ENCODE measurements at regions of chr13 and their contacts with region 1.

Region 1: GRCh38 chr13:44815623-44816022 is 173.6 kb downstream of the NUFIP1 start:
- DNase-seq: peak; percentile 90 to 96
- H3K4me3 ChIP-seq: no peak overlapping the region
- H3K4me3 Mint-ChIP-seq: peak overlapping the region; percentile 1
- H3K27ac Mint-ChIP-seq: peak overlapping the region; percentile 76
- H3K4me1 ChIP-seq: peaks cover 86% of the 10 kb centered on the region
- H3K4me1 Mint-ChIP-seq: peaks cover 77% of the 10 kb centered on the region
- H3K27me3 ChIP-seq: no peaks in the 10 kb centered on the region
- H3K27me3 Mint-ChIP-seq: no peaks in the 10 kb centered on the region
- CTCF ChIP-seq: no peak

Region 2: DNA sequence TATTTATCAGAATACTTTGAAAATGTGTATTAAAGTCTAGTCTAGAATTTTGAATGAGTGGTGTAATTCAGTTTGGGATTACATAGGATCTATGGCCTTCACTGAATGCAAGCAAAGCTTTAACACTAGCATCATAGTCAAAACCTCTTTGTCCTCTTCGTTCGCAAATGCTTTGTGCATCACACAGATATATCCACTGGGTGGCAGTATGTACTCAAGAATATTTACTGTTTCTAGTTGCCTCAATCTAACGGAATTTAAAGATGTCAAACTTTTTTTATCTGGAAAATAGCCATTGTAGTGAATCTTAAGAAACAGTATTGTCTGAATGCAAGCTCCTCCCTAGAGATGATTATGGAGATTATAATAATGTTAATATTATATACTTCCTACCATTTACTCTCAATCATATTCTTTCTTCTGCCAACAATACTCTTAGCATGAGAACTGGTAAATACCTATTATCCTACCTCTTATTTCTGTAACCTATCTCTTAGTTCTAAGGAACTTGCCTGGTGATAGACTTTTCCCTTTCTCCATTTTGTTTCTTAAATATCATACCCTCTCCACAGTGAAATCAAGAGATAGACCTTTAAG is 910.1 kb before region 1 on chr13:
- CTCF ChIA-PET with region 1: no interaction called
- POLR2A ChIA-PET with region 1: no interaction called
- intact Hi-C with region 1: loop called (anchors 10 kb)
- DNase-seq: peak in 1 of 2 experiments; percentile 63
- H3K4me3 ChIP-seq: no peak overlapping the region
- H3K4me3 Mint-ChIP-seq: no peak overlapping the region
- H3K27ac Mint-ChIP-seq: no peak overlapping the region
- H3K4me1 ChIP-seq: no peaks in the 10 kb centered on the region
- H3K4me1 Mint-ChIP-seq: peaks cover 7% of the 10 kb centered on the region
- H3K27me3 ChIP-seq: no peaks in the 10 kb centered on the region
- H3K27me3 Mint-ChIP-seq: peaks cover 2% of the 10 kb centered on the region
- CTCF ChIP-seq: peak; percentile 63 to 86

Region 3: DNA sequence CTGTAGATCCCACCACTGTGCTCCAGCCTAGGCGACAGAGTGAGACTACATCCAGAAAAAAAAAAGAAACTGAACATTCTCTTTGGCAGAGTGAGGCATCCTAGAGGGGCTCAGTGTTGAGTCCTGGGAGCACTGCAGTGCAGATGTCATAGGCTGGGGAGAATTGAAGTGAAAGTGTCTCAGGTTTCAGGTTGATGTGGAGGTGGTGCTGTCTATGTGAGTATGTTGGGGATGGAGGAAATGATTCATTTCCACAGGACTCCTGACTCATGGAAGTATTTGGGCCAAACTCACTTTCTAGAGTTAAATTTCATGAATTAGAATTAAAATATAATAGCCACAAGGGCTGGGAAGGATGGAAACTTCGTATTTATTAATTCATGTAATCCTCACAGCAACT is 105.0 kb before region 1 on chr13:
- CTCF ChIA-PET with region 1: no interaction called
- POLR2A ChIA-PET with region 1: no interaction called
- intact Hi-C with region 1: no loop called
- DNase-seq: no peak
- H3K4me3 ChIP-seq: no peak overlapping the region
- H3K4me3 Mint-ChIP-seq: no peak overlapping the region
- H3K27ac Mint-ChIP-seq: no peak overlapping the region
- H3K4me1 ChIP-seq: peaks cover 18% of the 10 kb centered on the region
- H3K4me1 Mint-ChIP-seq: peaks cover 7% of the 10 kb centered on the region
- H3K27me3 ChIP-seq: no peaks in the 10 kb centered on the region
- H3K27me3 Mint-ChIP-seq: no peaks in the 10 kb centered on the region
- CTCF ChIP-seq: no peak

Region 4: DNA sequence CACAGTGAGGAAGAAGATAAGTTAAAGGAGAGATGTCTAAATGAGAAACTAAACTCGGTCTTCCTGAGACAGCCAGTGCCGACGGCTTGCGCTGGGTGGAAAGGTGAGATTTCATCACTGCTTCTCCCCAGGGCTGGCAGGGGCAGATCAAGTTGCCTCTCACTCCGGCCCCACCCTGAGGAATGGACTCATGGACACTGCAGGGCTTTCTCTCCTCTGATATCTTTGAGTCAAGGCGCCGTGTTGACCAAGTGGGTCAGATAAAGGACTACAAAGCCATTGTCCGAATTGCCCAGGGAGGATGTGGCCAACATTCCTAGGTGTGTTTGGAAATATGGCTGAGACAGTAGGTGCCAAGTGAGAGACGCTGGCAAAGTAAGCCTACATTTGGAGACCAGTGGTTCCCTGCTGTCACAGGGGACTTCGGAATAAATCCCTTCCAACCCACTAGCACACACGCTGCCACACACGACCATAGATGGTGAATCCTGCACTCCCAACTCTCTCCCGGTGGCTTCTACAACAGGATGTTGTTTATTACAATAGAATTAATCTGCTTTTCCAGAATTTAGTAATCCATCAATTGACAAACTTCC is 83.0 kb before region 1 on chr13:
- CTCF ChIA-PET with region 1: no interaction called
- POLR2A ChIA-PET with region 1: no interaction called
- intact Hi-C with region 1: loop called (anchors 1 kb)
- DNase-seq: peak; percentile 86 to 94
- H3K4me3 ChIP-seq: no peak overlapping the region
- H3K4me3 Mint-ChIP-seq: peak overlapping the region; percentile 33
- H3K27ac Mint-ChIP-seq: peak overlapping the region; percentile 15
- H3K4me1 ChIP-seq: peaks cover 18% of the 10 kb centered on the region
- H3K4me1 Mint-ChIP-seq: peaks cover 31% of the 10 kb centered on the region
- H3K27me3 ChIP-seq: no peaks in the 10 kb centered on the region
- H3K27me3 Mint-ChIP-seq: no peaks in the 10 kb centered on the region
- CTCF ChIP-seq: no peak

Region 5: DNA sequence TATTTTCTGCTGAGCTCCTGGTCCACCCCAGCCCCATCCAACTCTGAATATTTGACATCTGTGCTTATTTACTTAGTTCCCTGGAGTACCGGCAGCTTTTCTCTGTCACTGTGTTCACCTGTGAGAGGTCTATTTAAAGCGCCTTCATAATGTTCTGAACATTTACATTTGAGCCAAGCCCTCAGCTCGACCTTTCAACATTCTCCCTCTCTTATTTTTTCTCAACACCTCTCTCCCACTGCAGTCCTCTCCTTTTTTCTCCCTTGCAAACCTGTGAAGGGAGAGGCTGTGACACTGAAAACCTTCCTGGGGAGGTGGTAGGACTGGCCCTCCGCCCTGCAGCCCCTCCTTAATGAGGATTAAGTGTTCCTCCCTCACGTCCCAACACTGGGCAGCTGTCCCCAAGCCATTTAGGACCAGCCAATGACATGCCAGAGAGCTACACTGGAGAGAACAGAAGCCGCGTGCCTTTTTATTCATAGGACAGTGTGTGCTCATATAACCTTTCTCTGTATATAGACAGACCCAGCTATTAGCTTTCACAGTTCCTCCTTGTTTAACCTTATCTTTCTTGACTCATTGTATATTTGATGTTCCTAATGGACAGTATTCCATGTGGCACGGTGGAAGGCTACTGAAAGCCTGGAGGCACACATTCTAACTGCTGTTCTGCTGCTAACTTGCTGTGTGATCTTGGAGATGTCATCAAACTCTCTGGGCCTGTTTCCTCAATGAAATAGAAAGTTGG is 38.9 kb after region 1 on chr13:
- CTCF ChIA-PET with region 1: interaction called, 3 read pairs
- POLR2A ChIA-PET with region 1: interaction called, 3 read pairs
- intact Hi-C with region 1: loop called (anchors 1 kb)
- DNase-seq: peak; percentile 66 to 79
- H3K4me3 ChIP-seq: peak overlapping the region; percentile 21
- H3K4me3 Mint-ChIP-seq: peak overlapping the region; percentile 74
- H3K27ac Mint-ChIP-seq: peak overlapping the region; percentile 73
- H3K4me1 ChIP-seq: peaks cover 37% of the 10 kb centered on the region
- H3K4me1 Mint-ChIP-seq: peaks cover 45% of the 10 kb centered on the region
- H3K27me3 ChIP-seq: no peaks in the 10 kb centered on the region
- H3K27me3 Mint-ChIP-seq: no peaks in the 10 kb centered on the region
- CTCF ChIP-seq: no peak

Region 6: GRCh38 chr13:44917589-44918325 is 102.1 kb after region 1 on chr13:
- CTCF ChIA-PET with region 1: interaction called, 5 read pairs
- POLR2A ChIA-PET with region 1: no interaction called
- intact Hi-C with region 1: loop called (anchors 1 kb)
- DNase-seq: peak; percentile 96 to 97
- H3K4me3 ChIP-seq: peak overlapping the region; percentile 61
- H3K4me3 Mint-ChIP-seq: no peak overlapping the region
- H3K27ac Mint-ChIP-seq: no peak overlapping the region
- H3K4me1 ChIP-seq: peaks cover 7% of the 10 kb centered on the region; the same call in 1 of the 2 replicates
- H3K4me1 Mint-ChIP-seq: no peaks in the 10 kb centered on the region
- H3K27me3 ChIP-seq: no peaks in the 10 kb centered on the region
- H3K27me3 Mint-ChIP-seq: no peaks in the 10 kb centered on the region
- CTCF ChIP-seq: peak; percentile 40 to 75

Region 7: DNA sequence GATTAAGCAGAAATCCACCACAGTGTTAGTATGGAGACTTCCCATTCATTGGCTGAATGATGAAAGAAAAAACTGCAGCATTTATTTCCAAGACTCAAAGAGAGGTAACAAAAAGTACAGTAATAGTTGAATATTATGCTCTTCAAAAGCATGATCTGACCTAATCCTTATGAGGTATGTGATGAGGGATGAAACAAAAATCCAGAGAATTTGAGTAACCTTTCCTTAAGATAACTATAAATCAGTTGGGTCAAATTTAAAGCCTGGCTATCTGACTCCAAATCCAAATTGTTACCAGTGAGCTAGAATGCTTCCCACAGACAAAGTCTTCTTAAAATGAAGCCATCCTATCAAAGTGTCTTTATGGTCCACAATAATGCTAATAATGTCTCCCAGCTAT is 135.6 kb after region 1 on chr13:
- CTCF ChIA-PET with region 1: no interaction called
- POLR2A ChIA-PET with region 1: no interaction called
- intact Hi-C with region 1: no loop called
- DNase-seq: no peak
- H3K4me3 ChIP-seq: no peak overlapping the region
- H3K4me3 Mint-ChIP-seq: no peak overlapping the region
- H3K27ac Mint-ChIP-seq: no peak overlapping the region
- H3K4me1 ChIP-seq: no peaks in the 10 kb centered on the region
- H3K4me1 Mint-ChIP-seq: no peaks in the 10 kb centered on the region
- H3K27me3 ChIP-seq: no peaks in the 10 kb centered on the region
- H3K27me3 Mint-ChIP-seq: no peaks in the 10 kb centered on the region
- CTCF ChIP-seq: no peak

Measured in Caco-2 (cell line).